T-cell (primary cell): ENCODE measurements at regions of chr12 and their contacts with region 1.

Region 1: GRCh38 chr12:116703214-116703795 is 34.6 kb downstream of the SPRING1 start:
- DNase-seq: peak; percentile 13 to 80 (median 53)
- ATAC-seq: peak in 3 of 4 experiments; percentile 56 to 65 (median 64)
- H3K4me3 ChIP-seq: no peak overlapping the region
- H3K4me3 Mint-ChIP-seq: no peak overlapping the region
- H3K27ac ChIP-seq: no peak overlapping the region
- H3K27ac Mint-ChIP-seq: no peak overlapping the region
- H3K4me1 ChIP-seq: peaks cover 0 to 3% of the 10 kb centered on the region in 2 experiments
- H3K4me1 Mint-ChIP-seq: peaks cover 2 to 6% (median 2%) of the 10 kb centered on the region in 3 donors
- H3K27me3 ChIP-seq: peaks cover 0 to 5% of the 10 kb centered on the region in 2 experiments
- H3K27me3 Mint-ChIP-seq: peaks cover 4 to 6% of the 10 kb centered on the region in 2 donors

Region 2: GRCh38 chr12:116737774-116738700 is 34.7 kb after region 1 on chr12 and contains the starts of genes RNFT2 and SPRING1:
- CTCF ChIA-PET with region 1: no interaction called
- POLR2A ChIA-PET with region 1: no interaction called
- DNase-seq: peak; percentile 96 to 100 (median 99)
- ATAC-seq: peak; percentile 95 to 97 (median 96)
- H3K4me3 ChIP-seq: peak within 1 kb of the TSS; percentile 64 to 85
- H3K4me3 Mint-ChIP-seq: peak within 1 kb of the TSS; percentile 94 to 97 (median 97)
- H3K27ac ChIP-seq: peak within 1 kb of the TSS; percentile 2
- H3K27ac Mint-ChIP-seq: peak within 1 kb of the TSS; percentile 74 to 87
- H3K4me1 ChIP-seq: peaks cover 13 to 21% of the 10 kb centered on the region in 2 experiments
- H3K4me1 Mint-ChIP-seq: peaks cover 33 to 42% (median 37%) of the 10 kb centered on the region in 3 donors
- H3K27me3 ChIP-seq: no peaks in the 10 kb centered on the region
- H3K27me3 Mint-ChIP-seq: no peaks in the 10 kb centered on the region
- total RNA-seq, gene RNFT2: 5.1 to 7.6 (median 6.9) TPM
- total RNA-seq, gene SPRING1: 15.0 to 31.7 (median 30.9) TPM

Region 3: DNA sequence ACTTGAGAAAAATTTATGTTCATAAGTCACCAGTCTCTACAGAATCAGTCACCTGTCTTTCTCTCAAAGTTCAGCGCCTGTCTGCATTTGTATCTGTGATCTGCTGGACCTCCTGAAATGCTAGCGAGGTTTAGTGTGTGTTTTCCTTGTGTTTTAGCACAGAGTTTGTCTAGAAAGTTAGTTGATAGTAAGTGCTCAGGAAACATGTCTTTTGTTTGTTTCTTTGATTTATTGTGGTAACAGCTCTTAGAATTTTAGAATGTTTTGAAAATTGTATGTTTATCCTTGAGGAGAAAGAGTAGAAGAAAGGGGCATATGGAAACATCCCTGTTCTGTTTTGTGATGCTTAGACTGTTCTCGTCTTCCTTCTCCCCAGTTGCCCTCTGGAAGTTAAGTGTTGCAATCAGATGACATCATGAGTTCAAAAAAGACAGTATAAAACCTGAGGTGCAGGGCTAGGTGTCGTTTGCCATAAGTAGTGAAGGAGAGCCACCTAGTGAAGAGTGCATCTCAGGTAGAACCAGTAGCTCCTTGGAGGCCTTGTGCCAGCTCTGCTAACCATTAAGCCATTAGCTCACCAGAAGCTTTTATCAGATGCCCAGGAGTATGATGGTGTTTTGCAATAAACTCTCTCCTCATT is 252.2 kb after region 1 on chr12:
- CTCF ChIA-PET with region 1: interaction called, 4 to 13 read pairs
- POLR2A ChIA-PET with region 1: no interaction called
- DNase-seq: peak in 17 of 35 experiments; percentile 1 to 61 (median 8)
- ATAC-seq: peak in 3 of 4 experiments; percentile 35 to 68 (median 56)
- H3K4me3 ChIP-seq: no peak overlapping the region
- H3K4me3 Mint-ChIP-seq: no peak overlapping the region
- H3K27ac ChIP-seq: no peak overlapping the region
- H3K27ac Mint-ChIP-seq: no peak overlapping the region
- H3K4me1 ChIP-seq: no peaks in the 10 kb centered on the region
- H3K4me1 Mint-ChIP-seq: peaks cover 9 to 16% (median 10%) of the 10 kb centered on the region in 3 donors
- H3K27me3 ChIP-seq: no peaks in the 10 kb centered on the region
- H3K27me3 Mint-ChIP-seq: no peaks in the 10 kb centered on the region